Posterior vena cava (tissue), 2 donors: ENCODE measurements at regions of chr13 and their contacts with region 1.

Region 1: DNA sequence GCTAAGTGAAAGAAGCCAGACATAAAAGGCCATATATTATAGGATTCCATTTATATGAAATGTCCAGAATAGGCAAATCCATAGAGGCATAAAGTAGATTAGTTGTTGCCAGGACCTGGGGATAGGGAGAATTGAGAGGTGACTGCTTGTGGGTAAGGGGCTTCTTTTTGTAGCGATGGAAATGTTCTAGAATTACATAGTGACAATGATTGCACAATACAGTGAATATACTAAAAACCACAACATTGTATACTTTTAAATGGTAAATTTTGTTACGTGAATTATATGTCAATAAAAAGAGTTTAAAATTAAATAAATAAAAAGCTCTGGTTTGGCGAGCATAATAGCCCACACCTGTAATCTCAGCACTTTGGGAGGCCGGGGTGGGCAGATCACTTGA is 486.8 kb downstream of the KLF12 start:
- DNase-seq: no peak

Region 2: DNA sequence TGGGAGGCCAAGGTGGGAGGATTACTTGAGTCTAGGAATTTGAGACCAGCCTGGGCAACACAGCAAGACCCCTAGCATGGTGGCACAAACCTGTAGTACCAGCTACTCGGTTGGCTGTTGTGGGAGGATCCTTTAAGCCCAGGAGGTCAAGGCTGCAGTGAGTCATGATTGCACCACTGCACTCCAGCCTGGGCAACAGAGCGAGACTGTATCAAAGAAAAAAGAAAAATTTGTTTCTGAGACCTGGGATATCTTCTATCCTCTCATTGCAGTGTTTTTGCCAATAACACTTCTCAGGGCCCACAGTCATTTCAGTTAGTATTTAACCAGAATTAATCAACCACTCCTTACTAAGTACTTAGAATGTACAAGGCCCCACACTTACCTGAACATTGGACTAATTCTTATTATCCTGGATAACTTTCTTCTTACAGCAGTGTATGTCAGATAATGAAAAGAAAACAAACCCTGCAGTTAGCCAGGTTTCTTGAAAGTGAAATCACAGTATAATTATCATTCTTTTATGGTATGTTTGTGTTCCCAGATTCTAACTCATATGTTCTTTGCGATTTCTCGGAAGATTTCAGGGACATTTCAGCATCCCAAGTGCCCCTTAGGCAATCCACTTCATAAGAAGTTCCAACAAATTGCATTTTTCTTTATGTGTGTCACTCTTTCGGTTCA is 664.2 kb before region 1 on chr13:
- intact Hi-C with region 1: loop called in 1 of 2 experiments (anchors 5 kb)
- DNase-seq: no peak